Common myeloid progenitor, CD34-positive (primary cell): ENCODE measurements at regions of chr3 and their contacts with region 1.

Region 1: DNA sequence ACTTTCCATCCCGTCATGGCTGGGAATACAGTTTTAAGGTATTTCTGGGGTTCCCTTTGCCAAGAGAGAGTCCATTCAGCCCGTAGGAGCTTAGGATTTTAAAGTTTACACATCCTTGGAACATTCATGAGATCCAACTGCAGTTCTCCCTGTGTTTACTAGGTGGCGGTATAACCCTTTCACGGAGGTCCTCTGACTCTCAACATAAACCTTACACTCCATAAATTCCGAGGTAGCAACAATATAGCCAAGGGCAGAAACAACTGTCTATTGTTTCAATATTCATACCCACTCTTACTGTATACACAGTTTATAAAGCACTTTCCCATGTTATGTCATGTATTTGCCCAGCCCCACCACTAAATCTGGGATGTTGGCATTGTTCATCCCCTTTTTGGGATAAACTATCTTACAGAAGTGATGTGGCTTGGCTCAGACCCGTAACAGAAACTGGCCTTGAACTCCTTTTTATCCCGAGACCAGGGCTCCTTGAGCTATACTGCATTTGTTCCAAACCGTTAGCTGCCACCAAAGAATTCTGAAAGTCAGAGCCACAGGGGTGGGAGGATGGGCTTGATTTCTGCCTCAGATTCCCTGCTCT is 69.2 kb upstream of the COL6A5 start:
- DNase-seq: peak; percentile 34 to 71 (median 63)
- H3K4me3 ChIP-seq: no peak overlapping the region
- H3K27ac ChIP-seq: no peak overlapping the region
- H3K4me1 ChIP-seq: no peaks in the 10 kb centered on the region
- H3K27me3 ChIP-seq: peaks cover 0 to 4% (median 0%) of the 10 kb centered on the region in 5 experiments

Region 2: DNA sequence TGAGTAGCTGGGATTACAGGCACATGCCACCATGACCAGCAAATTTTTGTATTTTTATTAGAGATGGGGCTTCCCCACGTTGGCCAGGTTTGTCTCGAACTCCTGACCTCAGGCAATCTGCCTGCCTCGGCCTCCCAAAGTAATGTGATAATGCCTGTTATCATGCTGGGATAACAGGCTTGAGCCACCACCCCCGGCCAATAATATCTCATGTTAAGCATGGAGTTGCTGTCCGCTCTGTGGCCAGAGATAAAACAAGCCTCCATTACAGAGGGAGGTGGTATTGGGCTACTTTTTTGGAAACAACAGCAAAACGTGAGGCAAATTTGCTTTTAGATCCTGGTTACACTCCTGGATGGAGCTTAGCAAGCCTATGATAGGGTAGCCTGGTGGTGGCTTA is 227.6 kb before region 1 on chr3:
- CTCF ChIA-PET with region 1: no interaction called
- POLR2A ChIA-PET with region 1: no interaction called
- DNase-seq: no peak
- H3K4me3 ChIP-seq: no peak overlapping the region
- H3K27ac ChIP-seq: no peak overlapping the region
- H3K4me1 ChIP-seq: peaks cover 2 to 10% (median 4%) of the 10 kb centered on the region in 4 experiments
- H3K27me3 ChIP-seq: no peaks in the 10 kb centered on the region

Region 3: GRCh38 chr3:130539005-130539404 is 262.7 kb after region 1 on chr3:
- CTCF ChIA-PET with region 1: interaction called, 10 read pairs
- POLR2A ChIA-PET with region 1: no interaction called
- DNase-seq: peak; percentile 65 to 73 (median 72)
- H3K4me3 ChIP-seq: no peak overlapping the region
- H3K27ac ChIP-seq: no peak overlapping the region
- H3K4me1 ChIP-seq: peaks cover 0 to 3% (median 0%) of the 10 kb centered on the region in 4 experiments
- H3K27me3 ChIP-seq: peaks cover 0 to 2% (median 0%) of the 10 kb centered on the region in 5 experiments